AG04450 (cell line): ENCODE measurements at regions of chr14 and their contacts with region 1.

Region 1: GRCh38 chr14:74612350-74613021 is 449 bp upstream of the LTBP2 start:
- DNase-seq: no peak
- H3K4me3 ChIP-seq: peak overlapping the region; percentile 75
- H3K27ac ChIP-seq: peak overlapping the region; percentile 47
- H3K27me3 ChIP-seq: no peaks in the 10 kb centered on the region
- CTCF ChIP-seq: peak; percentile 59

Region 2: DNA sequence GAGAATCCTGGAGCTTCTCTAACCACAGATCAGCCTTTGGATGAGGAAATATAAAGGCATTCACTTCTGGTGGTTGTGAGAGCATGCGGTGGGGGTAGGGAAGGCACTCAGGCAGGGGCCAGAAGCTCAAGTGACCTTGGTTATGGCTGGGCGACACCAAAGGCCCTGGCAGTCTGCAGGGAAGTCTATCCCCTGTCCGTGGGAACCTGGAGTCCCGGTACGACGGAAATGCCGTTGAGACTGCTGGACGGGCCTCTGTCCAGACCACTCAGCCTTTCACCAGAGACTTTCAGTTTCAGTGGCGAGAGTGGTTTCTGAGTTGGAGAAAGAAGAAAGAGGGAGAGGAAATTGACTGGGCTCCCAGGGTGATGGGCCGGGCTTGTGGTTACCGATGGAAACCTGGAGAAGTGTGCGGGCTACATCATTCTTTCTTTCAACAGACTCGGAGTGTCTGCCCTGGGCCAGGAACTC is 98.0 kb before region 1 on chr14:
- CTCF ChIA-PET with region 1: no interaction called
- POLR2A ChIA-PET with region 1: no interaction called
- DNase-seq: no peak
- H3K4me3 ChIP-seq: no peak overlapping the region
- H3K27ac ChIP-seq: peak overlapping the region; percentile 57
- H3K27me3 ChIP-seq: no peaks in the 10 kb centered on the region
- CTCF ChIP-seq: no peak

Region 3: GRCh38 chr14:74595006-74595735 is 17.3 kb before region 1 on chr14:
- CTCF ChIA-PET with region 1: interaction called, 20 read pairs
- POLR2A ChIA-PET with region 1: no interaction called
- DNase-seq: no peak
- H3K4me3 ChIP-seq: no peak overlapping the region
- H3K27ac ChIP-seq: peak overlapping the region; percentile 90
- H3K27me3 ChIP-seq: no peaks in the 10 kb centered on the region
- CTCF ChIP-seq: no peak

Region 4: GRCh38 chr14:74630881-74631690 is 18.6 kb after region 1 on chr14:
- CTCF ChIA-PET with region 1: interaction called, 11 read pairs
- POLR2A ChIA-PET with region 1: no interaction called
- DNase-seq: no peak
- H3K4me3 ChIP-seq: no peak overlapping the region
- H3K27ac ChIP-seq: peak overlapping the region; percentile 21
- H3K27me3 ChIP-seq: no peaks in the 10 kb centered on the region
- CTCF ChIP-seq: no peak

Region 5: DNA sequence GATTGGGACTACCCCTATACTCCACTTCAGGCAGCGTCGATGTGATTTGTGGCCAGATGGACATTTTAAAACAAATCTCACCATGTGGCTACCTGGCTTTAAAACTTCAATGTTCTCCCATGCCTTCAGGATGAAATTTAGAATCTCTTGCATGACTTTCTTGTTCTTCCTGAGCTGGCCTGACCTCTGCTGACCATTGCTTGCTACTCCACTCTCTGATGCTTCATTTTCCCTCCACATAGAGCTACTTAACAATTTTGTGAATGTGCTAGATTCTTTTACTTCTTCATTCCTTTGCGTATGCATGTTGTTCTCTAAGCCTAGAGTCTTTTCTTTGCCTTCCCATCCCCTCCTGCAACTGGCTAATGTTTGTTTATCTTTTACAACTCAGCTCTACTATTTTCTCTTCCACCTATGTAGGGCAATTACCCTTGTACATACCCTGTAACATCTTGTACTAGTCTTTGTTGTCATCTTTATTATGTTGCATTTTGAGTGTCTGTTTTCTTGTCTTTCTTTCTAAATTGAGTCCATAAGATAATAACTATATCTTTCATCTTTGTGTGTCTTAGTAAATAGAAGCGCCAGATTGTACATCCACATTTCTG is 191.8 kb after region 1 on chr14:
- CTCF ChIA-PET with region 1: interaction called, 106 read pairs
- POLR2A ChIA-PET with region 1: interaction called, 3 read pairs
- DNase-seq: peak; percentile 43
- H3K4me3 ChIP-seq: no peak overlapping the region
- H3K27ac ChIP-seq: no peak overlapping the region
- H3K27me3 ChIP-seq: no peaks in the 10 kb centered on the region
- CTCF ChIP-seq: peak; percentile 81